ENCODE measurements at regions of chr11 and their contacts with region 1.

Region 1: GRCh38 chr11:83540112-83540675 is 254.0 kb upstream of the CCDC90B start:
- DNase-seq: no peak
- ATAC-seq: no peak
- H3K4me3 ChIP-seq: no peak overlapping the region
- H3K27ac ChIP-seq: no peak overlapping the region
- H3K4me1 ChIP-seq: no peaks in the 10 kb centered on the region
- H3K27me3 ChIP-seq: peaks cover 26% of the 10 kb centered on the region
- CTCF ChIP-seq: no peak

Region 2: GRCh38 chr11:83510530-83511460 is 29.4 kb before region 1 on chr11:
- CTCF ChIA-PET with region 1: no interaction called
- POLR2A ChIA-PET with region 1: interaction called, 21 read pairs
- intact Hi-C with region 1: no loop called
- DNase-seq: no peak
- ATAC-seq: no peak
- H3K4me3 ChIP-seq: no peak overlapping the region
- H3K27ac ChIP-seq: no peak overlapping the region
- H3K4me1 ChIP-seq: no peaks in the 10 kb centered on the region
- H3K27me3 ChIP-seq: peaks cover 11% of the 10 kb centered on the region; the same call in 1 of the 2 replicates
- CTCF ChIP-seq: no peak

Measured in PC-3 (cell line).